Activated CD8-positive, alpha-beta T cell treated with anti-CD3 and anti-CD28 coated beads for 36 hours (primary cell): ENCODE measurements at regions of chrX and their contacts with region 1.

Region 1: GRCh38 chrX:137427806-137428205 is 138.1 kb upstream of the ZIC3 start:
- DNase-seq: peak; percentile 6
- ATAC-seq: no peak
- H3K4me3 Mint-ChIP-seq: peak overlapping the region; percentile 45
- H3K27ac Mint-ChIP-seq: no peak overlapping the region
- H3K4me1 Mint-ChIP-seq: peaks cover 8% of the 10 kb centered on the region
- H3K27me3 Mint-ChIP-seq: peaks cover 54% of the 10 kb centered on the region
- CTCF ChIP-seq: no peak

Region 2: GRCh38 chrX:137278825-137279224 is 149.0 kb before region 1 on chrX:
- CTCF ChIA-PET with region 1: no interaction called
- POLR2A ChIA-PET with region 1: no interaction called
- intact Hi-C with region 1: no loop called
- DNase-seq: no peak
- ATAC-seq: no peak
- H3K4me3 Mint-ChIP-seq: no peak overlapping the region
- H3K27ac Mint-ChIP-seq: no peak overlapping the region
- H3K4me1 Mint-ChIP-seq: no peaks in the 10 kb centered on the region
- H3K27me3 Mint-ChIP-seq: peaks cover 1% of the 10 kb centered on the region
- CTCF ChIP-seq: no peak

Region 3: GRCh38 chrX:137366018-137366633 is 61.7 kb before region 1 on chrX:
- CTCF ChIA-PET with region 1: no interaction called
- POLR2A ChIA-PET with region 1: no interaction called
- intact Hi-C with region 1: no loop called
- DNase-seq: no peak
- ATAC-seq: no peak
- H3K4me3 Mint-ChIP-seq: no peak overlapping the region
- H3K27ac Mint-ChIP-seq: no peak overlapping the region
- H3K4me1 Mint-ChIP-seq: no peaks in the 10 kb centered on the region
- H3K27me3 Mint-ChIP-seq: no peaks in the 10 kb centered on the region
- CTCF ChIP-seq: no peak

Region 4: DNA sequence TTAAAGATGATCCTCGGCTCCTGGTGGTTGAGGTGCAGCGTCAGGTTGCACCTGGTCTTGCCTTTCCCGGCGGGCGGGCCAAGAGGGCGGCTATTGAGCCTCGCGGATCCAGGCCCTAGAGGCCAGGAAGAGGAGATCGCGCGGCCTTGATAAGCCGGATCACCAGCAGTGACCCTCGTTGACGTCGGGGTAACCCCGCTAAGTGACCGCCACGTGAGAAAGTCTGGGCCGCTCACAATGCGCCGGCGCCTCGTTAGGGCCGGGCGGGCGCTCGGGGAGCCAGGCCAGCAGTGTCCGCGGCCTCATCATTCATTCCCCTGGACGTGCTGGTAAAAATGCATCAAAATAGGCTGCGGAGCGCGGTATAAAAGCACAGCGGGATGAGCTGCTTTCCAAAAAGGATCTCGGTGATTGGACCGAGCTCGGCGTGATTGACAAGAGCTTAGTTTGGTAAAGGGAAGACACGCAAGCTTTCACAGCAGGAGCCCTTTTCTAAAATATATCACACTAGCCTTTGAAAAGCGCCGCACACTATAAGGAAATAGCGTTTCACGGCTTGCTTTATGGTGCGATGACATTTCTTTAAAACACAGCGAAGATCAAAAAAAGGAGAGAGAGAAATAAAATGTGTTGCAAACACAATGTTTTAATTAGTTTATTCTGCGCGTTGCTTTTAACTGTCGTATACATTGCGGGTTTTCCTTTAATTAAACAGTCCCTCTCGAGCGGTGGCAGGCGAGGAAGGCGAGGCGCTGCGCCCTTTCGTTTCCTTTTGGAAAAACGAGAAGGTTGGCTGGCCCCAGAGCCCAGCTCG is 122.3 kb after region 1 on chrX:
- CTCF ChIA-PET with region 1: no interaction called
- POLR2A ChIA-PET with region 1: no interaction called
- intact Hi-C with region 1: loop called (anchors 5 kb)
- DNase-seq: no peak
- ATAC-seq: no peak
- H3K4me3 Mint-ChIP-seq: no peak overlapping the region
- H3K27ac Mint-ChIP-seq: no peak overlapping the region
- H3K4me1 Mint-ChIP-seq: peaks cover 5% of the 10 kb centered on the region
- H3K27me3 Mint-ChIP-seq: peaks cover 38% of the 10 kb centered on the region
- CTCF ChIP-seq: no peak

Region 5: DNA sequence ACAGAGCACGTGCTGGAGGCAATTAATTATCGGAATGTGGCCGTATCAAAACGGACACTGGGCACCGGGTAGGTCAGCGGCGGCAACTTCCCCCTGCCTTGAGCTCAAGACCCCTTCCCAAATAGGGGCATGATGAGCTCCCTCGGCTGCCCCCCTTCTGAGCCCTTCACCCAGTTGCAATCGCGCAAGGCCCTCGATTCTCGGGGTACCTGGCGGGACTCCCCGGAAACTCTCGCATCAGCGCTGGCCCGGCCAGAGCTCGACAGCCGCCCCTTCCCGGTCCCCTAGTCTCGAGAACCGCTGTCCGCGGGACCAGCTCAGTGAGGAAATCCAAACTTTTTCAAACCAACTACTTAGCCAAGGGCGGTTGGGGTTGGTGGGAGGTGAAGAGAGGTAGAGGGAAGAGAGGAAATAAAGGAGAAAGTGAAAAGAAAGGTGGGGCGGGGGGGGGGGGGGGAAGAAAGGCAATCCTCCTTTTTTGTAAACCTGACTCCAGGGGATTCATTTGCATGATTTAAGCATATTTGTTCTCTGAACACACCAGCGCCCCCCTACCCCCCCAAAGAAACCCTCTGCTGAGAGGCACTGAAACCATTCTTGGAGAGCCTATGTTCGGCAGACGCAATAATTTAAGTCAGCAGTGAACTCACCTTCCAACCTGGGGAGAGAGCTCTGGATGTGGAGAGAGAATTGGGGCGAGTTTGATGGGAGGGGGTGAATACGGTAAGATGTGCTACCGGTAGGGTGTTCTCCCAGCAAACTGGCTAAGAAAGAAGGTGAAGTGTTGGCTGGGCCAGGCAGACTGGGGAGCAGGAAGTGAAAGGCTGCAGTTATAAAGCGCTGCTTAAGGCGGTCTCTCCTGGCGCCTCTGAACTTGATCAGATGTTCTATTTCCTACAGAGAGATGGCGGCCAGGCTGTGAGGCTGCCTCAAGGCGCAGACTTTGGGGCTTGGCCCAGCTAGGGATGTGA is 136.2 kb after region 1 on chrX:
- CTCF ChIA-PET with region 1: no interaction called
- POLR2A ChIA-PET with region 1: no interaction called
- intact Hi-C with region 1: loop called (anchors 5 kb)
- DNase-seq: no peak
- ATAC-seq: no peak
- H3K4me3 Mint-ChIP-seq: no peak overlapping the region
- H3K27ac Mint-ChIP-seq: no peak overlapping the region
- H3K4me1 Mint-ChIP-seq: peaks cover 13% of the 10 kb centered on the region
- H3K27me3 Mint-ChIP-seq: peaks cover 43% of the 10 kb centered on the region
- CTCF ChIP-seq: no peak